Heart left ventricle (tissue), 16 donors: ENCODE measurements at regions of chr9 and their contacts with region 1.

Region 1: GRCh38 chr9:76181020-76181641 is 213.1 kb downstream of the RFK start:
- DNase-seq: no peak
- ATAC-seq: no peak
- H3K4me3 ChIP-seq: no peak overlapping the region
- H3K27ac ChIP-seq: no peak overlapping the region
- H3K4me1 ChIP-seq: peaks cover 0 to 8% (median 0%) of the 10 kb centered on the region in 12 donors
- H3K27me3 ChIP-seq: no peaks in the 10 kb centered on the region
- CTCF ChIP-seq: no peak
- POLR2A ChIP-seq: no peak

Region 2: DNA sequence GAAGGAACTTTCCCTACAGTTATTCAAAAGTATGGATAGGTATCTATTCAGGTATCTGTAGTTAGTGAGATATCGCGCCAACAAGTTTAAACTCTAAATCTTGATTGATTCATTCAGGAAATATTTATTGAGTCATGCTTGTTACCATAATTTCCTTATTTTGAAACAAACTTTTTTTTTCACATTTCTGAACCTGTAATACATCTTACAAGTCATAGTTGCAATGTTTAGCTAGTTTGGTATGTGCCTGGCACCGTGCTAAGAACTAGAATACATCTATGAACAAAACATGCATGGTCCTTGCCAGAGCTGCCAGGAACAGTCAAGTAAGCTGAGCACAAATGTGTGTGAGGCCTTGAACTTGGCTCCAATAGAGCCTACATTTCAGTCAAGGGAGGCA is 64.2 kb before region 1 on chr9:
- intact Hi-C with region 1: no loop called
- DNase-seq: no peak
- ATAC-seq: peak in 1 of 4 donors; percentile 20
- H3K4me3 ChIP-seq: no peak overlapping the region
- H3K27ac ChIP-seq: no peak overlapping the region
- H3K4me1 ChIP-seq: peaks cover 0 to 13% (median 0%) of the 10 kb centered on the region in 12 donors
- H3K27me3 ChIP-seq: no peaks in the 10 kb centered on the region
- CTCF ChIP-seq: no peak
- POLR2A ChIP-seq: no peak

Region 3: DNA sequence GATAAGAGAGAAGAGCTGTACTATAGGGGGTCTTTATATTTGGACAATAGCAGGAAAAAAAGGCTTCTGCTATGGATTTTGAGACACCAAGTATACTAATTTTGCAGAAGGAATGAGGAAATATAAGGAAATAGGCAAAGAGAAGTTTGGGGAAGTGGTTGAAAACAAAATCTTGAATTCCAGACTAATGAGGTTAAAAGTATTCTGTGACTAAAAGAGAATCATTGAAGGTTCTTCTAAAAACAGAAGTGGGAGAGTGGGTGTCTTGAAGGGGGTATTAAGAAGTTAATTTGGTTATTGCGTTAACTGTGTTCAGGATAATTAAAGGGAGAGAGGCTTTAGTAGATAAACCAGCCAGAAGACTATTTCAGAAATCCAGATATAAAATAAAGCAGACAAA is 64.4 kb after region 1 on chr9:
- intact Hi-C with region 1: loop called in 1 of 10 experiments (anchors 10 kb)
- DNase-seq: no peak
- ATAC-seq: no peak
- H3K4me3 ChIP-seq: no peak overlapping the region
- H3K27ac ChIP-seq: no peak overlapping the region
- H3K4me1 ChIP-seq: peaks cover 0 to 11% (median 0%) of the 10 kb centered on the region in 12 donors
- H3K27me3 ChIP-seq: no peaks in the 10 kb centered on the region
- CTCF ChIP-seq: no peak
- POLR2A ChIP-seq: no peak